Sigmoid colon (tissue), 7 donors: ENCODE measurements at regions of chr1 and their contacts with region 1.

Region 1: GRCh38 chr1:226973898-226974543 is 33.9 kb downstream of the COQ8A start:
- DNase-seq: peak; percentile 91
- H3K4me3 ChIP-seq: no peak overlapping the region
- H3K27ac ChIP-seq: peak overlapping the region; percentile 77 to 95 (median 89)
- H3K4me1 ChIP-seq: peaks cover 0 to 39% (median 37%) of the 10 kb centered on the region in 4 donors
- H3K27me3 ChIP-seq: no peaks in the 10 kb centered on the region
- CTCF ChIP-seq: no peak
- EP300 ChIP-seq: peak in 2 of 4 donors; percentile 65 to 78
- POLR2A ChIP-seq: no peak

Region 2: GRCh38 chr1:226634166-226634588 is 339.8 kb before region 1 on chr1:
- intact Hi-C with region 1: loop called (anchors 10 kb)
- DNase-seq: peak; percentile 93
- H3K4me3 ChIP-seq: no peak overlapping the region
- H3K27ac ChIP-seq: peak overlapping the region; percentile 75 to 85 (median 80)
- H3K4me1 ChIP-seq: peaks cover 0 to 62% (median 57%) of the 10 kb centered on the region in 4 donors
- H3K27me3 ChIP-seq: no peaks in the 10 kb centered on the region
- CTCF ChIP-seq: peak; percentile 80 to 97 (median 94)
- EP300 ChIP-seq: no peak
- POLR2A ChIP-seq: no peak

Region 3: GRCh38 chr1:226882631-226883409 is 91.2 kb before region 1 on chr1:
- intact Hi-C with region 1: no loop called
- DNase-seq: no peak
- H3K4me3 ChIP-seq: peak overlapping the region in 2 of 4 donors; percentile 8 to 9
- H3K27ac ChIP-seq: peak overlapping the region; percentile 6 to 54 (median 30)
- H3K4me1 ChIP-seq: peaks cover 0 to 12% (median 0%) of the 10 kb centered on the region in 4 donors
- H3K27me3 ChIP-seq: no peaks in the 10 kb centered on the region
- CTCF ChIP-seq: no peak
- EP300 ChIP-seq: no peak
- POLR2A ChIP-seq: no peak

Region 4: DNA sequence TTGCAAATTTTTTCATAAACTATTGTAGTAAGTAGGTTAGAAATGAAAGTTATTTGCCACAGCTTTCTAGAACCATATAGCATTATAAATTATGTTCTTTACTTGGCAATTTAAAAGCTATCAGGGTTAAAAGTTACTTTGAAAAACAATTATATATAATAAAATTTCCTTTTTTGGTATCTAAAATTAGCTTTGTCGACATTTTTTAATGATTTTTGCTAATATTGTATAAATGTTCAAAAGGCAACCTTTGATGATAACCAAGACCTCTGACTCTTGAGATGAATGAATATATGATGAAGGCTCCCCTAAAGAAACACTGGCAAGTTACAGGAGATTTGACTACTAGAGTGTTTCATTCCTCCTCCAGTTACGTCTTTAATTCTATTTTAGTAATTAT is 223.0 kb after region 1 on chr1:
- intact Hi-C with region 1: no loop called
- DNase-seq: no peak
- H3K4me3 ChIP-seq: no peak overlapping the region
- H3K27ac ChIP-seq: no peak overlapping the region
- H3K4me1 ChIP-seq: no peaks in the 10 kb centered on the region
- H3K27me3 ChIP-seq: no peaks in the 10 kb centered on the region
- CTCF ChIP-seq: no peak
- EP300 ChIP-seq: no peak
- POLR2A ChIP-seq: no peak

Region 5: GRCh38 chr1:227318003-227318852 is 344.2 kb after region 1 on chr1 and contains the start of gene CDC42BPA:
- intact Hi-C with region 1: loop called (anchors 10 kb)
- DNase-seq: peak; percentile 94
- H3K4me3 ChIP-seq: peak within 1 kb of the TSS; percentile 65 to 96 (median 85)
- H3K27ac ChIP-seq: peak within 1 kb of the TSS; percentile 86 to 97 (median 96)
- H3K4me1 ChIP-seq: peaks cover 0 to 23% (median 11%) of the 10 kb centered on the region in 4 donors
- H3K27me3 ChIP-seq: no peaks in the 10 kb centered on the region
- CTCF ChIP-seq: no peak
- EP300 ChIP-seq: no peak
- POLR2A ChIP-seq: peak; percentile 38 to 55
- total RNA-seq, gene CDC42BPA: 60.8 to 93.6 (median 66.3) TPM